Left colon (tissue), 2 donors: ENCODE measurements at regions of chrX and their contacts with region 1.

Region 1: GRCh38 chrX:65196758-65197360 is 220.6 kb upstream of the ZC4H2 start:
- DNase-seq: peak; percentile 84 to 85
- ATAC-seq: peak; percentile 94

Region 2: GRCh38 chrX:64994131-64994798 is 202.6 kb before region 1 on chrX:
- intact Hi-C with region 1: no loop called
- DNase-seq: no peak
- ATAC-seq: no peak

Region 3: GRCh38 chrX:65034668-65035445 is 162.0 kb before region 1 on chrX:
- intact Hi-C with region 1: loop called in 1 of 2 experiments (anchors 10 kb)
- DNase-seq: peak; percentile 78 to 79
- ATAC-seq: peak; percentile 93

Region 4: GRCh38 chrX:65610040-65610439 is 413.2 kb after region 1 on chrX:
- intact Hi-C with region 1: no loop called
- DNase-seq: no peak
- ATAC-seq: no peak